Activated CD4-positive, alpha-beta memory T cell treated with anti-CD3 and anti-CD28 coated beads for 36 hours (primary cell): ENCODE measurements at regions of chr3 and their contacts with region 1.

Region 1: DNA sequence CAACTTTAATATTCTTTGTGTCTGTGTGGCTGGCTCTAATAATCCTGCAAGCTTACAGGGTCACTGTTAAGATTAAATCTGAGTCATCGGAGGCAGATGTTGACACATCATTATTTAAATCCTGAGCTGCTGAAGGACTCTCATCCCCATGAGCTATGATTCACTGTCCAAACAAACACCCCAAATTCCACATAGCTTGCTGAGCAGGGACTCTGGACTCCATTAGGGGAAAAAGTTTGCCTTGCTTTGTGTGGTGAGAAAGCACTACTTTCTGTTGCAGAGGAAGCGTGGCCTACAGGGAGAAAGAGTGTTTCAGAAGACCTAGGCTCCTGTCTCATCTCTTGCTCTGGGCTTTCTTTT is 213.7 kb downstream of the PDCD6IP start:
- DNase-seq: no peak
- H3K4me3 Mint-ChIP-seq: no peak overlapping the region
- H3K27ac Mint-ChIP-seq: no peak overlapping the region
- H3K4me1 Mint-ChIP-seq: peaks cover 5% of the 10 kb centered on the region
- H3K27me3 Mint-ChIP-seq: no peaks in the 10 kb centered on the region

Region 2: DNA sequence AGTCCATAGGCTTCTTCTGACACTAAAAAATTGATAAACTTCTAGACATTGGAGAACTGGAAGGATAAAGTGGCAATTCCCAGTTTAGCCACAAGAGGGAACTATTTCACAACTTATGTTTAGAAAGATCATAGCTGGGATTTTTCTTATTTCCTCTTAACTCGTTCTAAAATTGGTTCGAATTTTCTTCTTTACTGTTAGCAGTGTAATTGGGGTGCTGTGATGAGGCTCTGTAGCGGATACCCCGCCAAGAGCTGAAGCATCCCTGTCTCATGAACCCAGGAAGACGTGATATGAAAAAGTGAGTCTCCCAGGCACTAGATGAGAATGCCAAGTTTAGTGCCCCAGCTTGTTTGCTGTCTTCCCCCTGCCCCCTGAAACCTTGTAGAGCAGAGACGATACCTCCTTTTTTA is 128.5 kb before region 1 on chr3:
- CTCF ChIA-PET with region 1: interaction called, 18 read pairs
- POLR2A ChIA-PET with region 1: no interaction called
- intact Hi-C with region 1: loop called (anchors 10 kb)
- DNase-seq: no peak
- H3K4me3 Mint-ChIP-seq: no peak overlapping the region
- H3K27ac Mint-ChIP-seq: no peak overlapping the region
- H3K4me1 Mint-ChIP-seq: peaks cover 4% of the 10 kb centered on the region
- H3K27me3 Mint-ChIP-seq: no peaks in the 10 kb centered on the region

Region 3: DNA sequence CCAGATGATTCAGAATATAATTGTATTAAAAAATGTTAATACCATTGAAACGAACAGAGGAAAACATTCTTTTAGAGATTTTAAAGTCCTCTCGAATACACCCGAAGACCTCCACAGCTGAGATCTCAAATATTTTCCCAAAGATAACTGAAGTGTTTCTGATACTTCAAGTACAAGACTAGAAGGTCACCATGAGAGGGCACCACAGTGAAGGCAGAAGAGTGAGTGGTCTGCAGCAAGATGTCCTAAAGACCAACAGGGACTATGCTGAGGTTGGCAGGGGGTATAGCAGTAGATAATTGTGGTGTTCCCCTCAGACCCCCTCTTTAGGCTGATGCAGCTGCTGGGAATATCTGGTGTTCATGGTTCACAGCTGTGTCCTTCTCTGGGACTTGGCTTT is 57.1 kb before region 1 on chr3:
- CTCF ChIA-PET with region 1: no interaction called
- POLR2A ChIA-PET with region 1: no interaction called
- intact Hi-C with region 1: no loop called
- DNase-seq: no peak
- H3K4me3 Mint-ChIP-seq: no peak overlapping the region
- H3K27ac Mint-ChIP-seq: no peak overlapping the region
- H3K4me1 Mint-ChIP-seq: no peaks in the 10 kb centered on the region
- H3K27me3 Mint-ChIP-seq: no peaks in the 10 kb centered on the region

Region 4: GRCh38 chr3:33993631-33994030 is 18.5 kb before region 1 on chr3:
- CTCF ChIA-PET with region 1: no interaction called
- POLR2A ChIA-PET with region 1: no interaction called
- intact Hi-C with region 1: no loop called
- DNase-seq: no peak
- H3K4me3 Mint-ChIP-seq: no peak overlapping the region
- H3K27ac Mint-ChIP-seq: no peak overlapping the region
- H3K4me1 Mint-ChIP-seq: no peaks in the 10 kb centered on the region
- H3K27me3 Mint-ChIP-seq: peaks cover 13% of the 10 kb centered on the region